PC-3 (cell line): ENCODE measurements at regions of chr10 and their contacts with region 1.

Region 1: DNA sequence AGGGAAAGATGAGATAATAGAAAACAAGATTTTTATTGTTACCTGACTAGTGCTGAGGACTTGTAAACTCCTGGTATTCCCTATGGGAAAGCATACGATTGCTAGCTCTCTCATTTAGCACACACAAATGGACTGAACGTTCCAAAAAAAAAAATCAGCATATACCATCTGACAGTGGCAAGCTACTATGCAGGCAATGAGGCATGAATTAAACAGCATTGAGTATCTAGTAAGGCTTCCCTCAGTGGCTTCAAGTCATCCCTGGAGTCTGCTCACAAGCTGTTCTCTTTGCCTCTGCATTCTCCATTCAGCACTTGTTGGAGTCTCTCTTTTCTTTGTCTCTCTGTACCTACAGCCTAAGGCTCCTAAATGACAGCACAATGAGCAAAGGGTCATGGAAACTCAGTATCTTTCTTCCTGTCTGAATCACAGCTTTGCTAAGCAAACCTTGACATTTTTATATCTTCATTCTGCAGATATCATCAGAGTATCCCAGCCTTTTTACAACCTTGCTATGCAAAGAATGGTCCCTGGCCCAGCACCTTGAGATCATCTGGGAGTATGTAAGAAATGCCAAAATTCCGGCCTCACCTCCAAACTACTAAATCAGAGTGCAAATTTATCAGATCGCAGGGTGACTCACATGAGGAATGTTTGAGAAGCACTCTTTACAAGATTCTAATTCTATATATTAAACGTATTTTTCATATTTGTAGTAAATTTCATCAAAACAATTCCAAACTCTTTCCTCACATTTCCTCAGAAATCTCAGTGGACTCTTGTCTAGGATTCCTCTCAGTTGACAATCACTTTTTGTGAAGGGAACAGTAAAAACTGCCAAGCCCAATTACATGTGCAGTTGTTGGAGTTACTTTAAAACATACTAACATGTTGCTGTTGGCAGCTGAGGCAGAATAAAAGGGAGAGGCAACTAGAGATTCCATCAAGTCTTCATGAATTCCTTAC is 10.8 kb upstream of the LIPA start:
- DNase-seq: peak; percentile 96
- ATAC-seq: peak; percentile 76
- H3K4me3 ChIP-seq: peak overlapping the region; percentile 40
- H3K27ac ChIP-seq: peak overlapping the region; percentile 99
- H3K4me1 ChIP-seq: peaks cover 60% of the 10 kb centered on the region
- H3K27me3 ChIP-seq: no peaks in the 10 kb centered on the region
- CTCF ChIP-seq: no peak

Region 2: DNA sequence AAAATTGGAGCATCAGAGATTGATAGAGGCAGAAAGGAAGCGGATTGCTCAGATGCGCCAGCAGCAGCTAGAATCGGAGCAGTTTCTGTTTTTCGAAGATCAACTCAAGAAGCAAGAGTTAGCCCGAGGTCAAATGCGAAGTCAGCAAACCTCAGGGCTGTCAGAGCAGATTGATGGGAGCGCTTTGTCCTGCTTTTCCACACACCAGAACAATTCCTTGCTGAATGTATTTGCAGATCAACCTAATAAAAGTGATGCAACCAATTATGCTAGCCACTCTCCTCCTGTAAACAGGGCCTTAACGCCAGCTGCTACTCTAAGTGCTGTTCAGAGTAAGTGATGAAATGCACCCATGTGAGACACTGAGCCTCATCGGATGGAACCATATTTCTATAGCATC is 349.2 kb before region 1 on chr10:
- CTCF ChIA-PET with region 1: no interaction called
- POLR2A ChIA-PET with region 1: no interaction called
- intact Hi-C with region 1: no loop called
- DNase-seq: no peak
- ATAC-seq: no peak
- H3K4me3 ChIP-seq: no peak overlapping the region
- H3K27ac ChIP-seq: no peak overlapping the region
- H3K4me1 ChIP-seq: no peaks in the 10 kb centered on the region
- H3K27me3 ChIP-seq: no peaks in the 10 kb centered on the region
- CTCF ChIP-seq: no peak

Region 3: DNA sequence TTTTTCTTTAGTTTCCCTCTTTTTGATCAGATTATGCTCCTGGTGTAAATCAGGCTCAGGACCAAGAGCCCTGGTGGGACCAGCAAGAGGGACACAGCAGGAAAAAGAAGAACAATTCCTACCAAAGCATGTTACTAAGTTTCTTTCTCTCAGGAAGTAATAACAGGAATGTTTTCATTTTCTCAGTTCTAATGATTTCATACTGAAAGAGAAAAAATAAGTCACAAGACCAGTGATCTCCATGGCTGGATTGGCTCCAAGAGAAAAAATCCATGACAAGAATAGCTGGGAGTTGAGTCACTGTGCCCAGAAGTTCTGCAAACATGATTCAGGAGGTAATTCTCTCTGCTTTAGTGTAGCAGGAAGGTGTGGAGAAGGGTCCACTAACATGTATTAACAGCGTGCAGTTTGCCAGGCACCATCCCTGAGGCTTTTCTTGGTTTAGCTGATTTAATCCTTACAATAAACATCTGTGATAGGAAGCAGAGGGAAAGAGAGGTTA is 15.7 kb after region 1 on chr10:
- CTCF ChIA-PET with region 1: no interaction called
- POLR2A ChIA-PET with region 1: no interaction called
- intact Hi-C with region 1: loop called (anchors 1 kb)
- DNase-seq: peak; percentile 98
- ATAC-seq: peak; percentile 85
- H3K4me3 ChIP-seq: peak overlapping the region; percentile 28; the same call in 1 of the 2 replicates
- H3K27ac ChIP-seq: peak overlapping the region; percentile 96
- H3K4me1 ChIP-seq: peaks cover 71% of the 10 kb centered on the region
- H3K27me3 ChIP-seq: no peaks in the 10 kb centered on the region
- CTCF ChIP-seq: no peak

Region 4: DNA sequence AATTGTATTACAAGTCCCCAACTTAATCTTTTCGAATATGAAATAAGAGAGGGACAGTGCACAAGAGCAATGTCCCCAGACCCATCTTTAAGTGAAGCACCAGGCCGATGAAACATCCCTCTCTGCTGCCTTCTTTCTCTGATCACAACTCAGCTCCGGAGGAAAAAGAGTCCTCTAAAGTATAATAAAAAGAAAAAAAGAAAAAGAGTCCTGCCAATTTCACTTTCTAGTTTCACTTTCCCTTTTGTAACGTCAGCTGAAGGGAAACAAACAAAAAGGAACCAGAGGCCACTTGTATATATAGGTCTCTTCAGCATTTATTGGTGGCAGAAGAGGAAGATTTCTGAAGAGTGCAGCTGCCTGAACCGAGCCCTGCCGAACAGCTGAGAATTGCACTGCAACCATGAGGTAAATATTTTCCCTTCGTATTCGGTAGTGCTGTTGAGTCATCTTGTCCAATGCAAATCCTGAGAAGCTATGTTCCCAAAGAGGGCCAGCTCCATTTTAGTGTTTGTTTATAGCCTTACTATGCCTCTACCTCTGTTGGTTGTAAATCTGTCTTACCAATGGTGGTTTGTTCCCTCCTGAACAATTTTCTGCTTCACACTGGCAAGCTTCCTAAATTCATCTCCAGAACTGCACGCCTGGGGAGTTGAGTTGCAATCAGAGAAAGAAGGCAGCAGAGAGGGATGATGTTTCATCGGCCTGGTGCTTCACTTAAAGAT is 39.5 kb after region 1 on chr10 and contains the start of gene IFIT2:
- CTCF ChIA-PET with region 1: no interaction called
- POLR2A ChIA-PET with region 1: interaction called, 5 read pairs
- intact Hi-C with region 1: loop called (anchors 1 kb)
- DNase-seq: peak; percentile 71
- ATAC-seq: peak; percentile 67
- H3K4me3 ChIP-seq: peak within 1 kb of the TSS; percentile 66
- H3K27ac ChIP-seq: peak within 1 kb of the TSS; percentile 79
- H3K4me1 ChIP-seq: peaks cover 30% of the 10 kb centered on the region
- H3K27me3 ChIP-seq: no peaks in the 10 kb centered on the region
- CTCF ChIP-seq: no peak
- total RNA-seq, gene IFIT2: 6.9 and 8.6 TPM in 2 replicates

Region 5: GRCh38 chr10:89327784-89328441 is 65.5 kb after region 1 on chr10 and contains the start of gene IFIT3:
- CTCF ChIA-PET with region 1: no interaction called
- POLR2A ChIA-PET with region 1: no interaction called
- intact Hi-C with region 1: loop called (anchors 1 kb)
- DNase-seq: peak; percentile 80
- ATAC-seq: peak; percentile 78
- H3K4me3 ChIP-seq: peak within 1 kb of the TSS; percentile 75
- H3K27ac ChIP-seq: peak within 1 kb of the TSS; percentile 94
- H3K4me1 ChIP-seq: peaks cover 45% of the 10 kb centered on the region
- H3K27me3 ChIP-seq: no peaks in the 10 kb centered on the region
- CTCF ChIP-seq: no peak
- total RNA-seq, gene IFIT3: 5.0 and 7.1 TPM in 2 replicates

Region 6: DNA sequence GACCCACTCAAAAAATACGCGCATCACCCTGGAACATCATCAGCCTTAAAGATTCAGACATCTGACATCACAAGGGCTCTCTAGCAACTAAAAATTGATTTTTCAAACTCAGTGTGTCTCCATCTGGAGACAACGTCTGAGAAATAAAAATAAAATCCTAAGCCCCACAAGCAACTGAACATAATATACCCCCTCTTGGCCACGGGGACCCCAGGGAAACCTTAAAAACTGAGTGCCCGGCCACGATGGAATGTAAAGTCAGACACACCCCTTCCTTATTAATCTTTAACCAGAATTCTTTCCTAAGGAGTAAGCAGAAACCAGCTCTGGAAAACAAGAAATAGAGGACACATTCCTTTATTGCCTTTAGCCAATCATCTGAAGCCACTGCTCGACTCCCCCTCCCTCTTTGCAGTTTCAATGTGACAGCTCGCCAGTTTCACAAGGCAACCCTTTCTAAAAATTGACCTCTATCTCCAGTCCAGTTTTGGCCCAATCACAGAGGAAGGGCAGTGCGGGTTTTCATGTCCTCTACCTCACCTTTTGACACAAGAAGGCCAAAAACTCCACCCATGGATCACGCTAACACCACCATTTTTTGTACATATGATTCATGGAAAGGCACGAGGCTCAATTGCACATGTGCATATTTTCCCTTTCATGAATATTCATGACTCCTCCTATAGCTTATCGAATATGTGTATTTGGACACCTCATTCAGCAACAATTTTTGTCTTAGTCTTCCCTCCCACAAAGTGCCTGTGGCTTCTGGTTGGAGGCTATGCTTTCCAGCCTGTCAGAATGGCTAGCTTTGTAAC is 89.6 kb after region 1 on chr10:
- CTCF ChIA-PET with region 1: no interaction called
- POLR2A ChIA-PET with region 1: no interaction called
- intact Hi-C with region 1: loop called (anchors 1 kb)
- DNase-seq: peak; percentile 92
- ATAC-seq: peak; percentile 77
- H3K4me3 ChIP-seq: peak overlapping the region; percentile 25; the same call in 1 of the 2 replicates
- H3K27ac ChIP-seq: peak overlapping the region; percentile 87
- H3K4me1 ChIP-seq: peaks cover 43% of the 10 kb centered on the region
- H3K27me3 ChIP-seq: no peaks in the 10 kb centered on the region
- CTCF ChIP-seq: no peak

Region 7: GRCh38 chr10:89369156-89370105 is 107.1 kb after region 1 on chr10:
- CTCF ChIA-PET with region 1: no interaction called
- POLR2A ChIA-PET with region 1: interaction called, 3 read pairs
- intact Hi-C with region 1: loop called (anchors 1 kb)
- DNase-seq: peak; percentile 59
- ATAC-seq: peak; percentile 39
- H3K4me3 ChIP-seq: no peak overlapping the region
- H3K27ac ChIP-seq: peak overlapping the region; percentile 13; the same call in 1 of the 2 replicates
- H3K4me1 ChIP-seq: peaks cover 34% of the 10 kb centered on the region
- H3K27me3 ChIP-seq: no peaks in the 10 kb centered on the region
- CTCF ChIP-seq: peak; percentile 80